ENCODE measurements at regions of chr4 and their contacts with region 1.

Region 1: GRCh38 chr4:168153596-168154440 is 61.5 kb downstream of the ANXA10 start:
- H3K4me3 Mint-ChIP-seq: no peak overlapping the region
- H3K27ac Mint-ChIP-seq: no peak overlapping the region
- H3K4me1 Mint-ChIP-seq: no peaks in the 10 kb centered on the region
- H3K27me3 Mint-ChIP-seq: no peaks in the 10 kb centered on the region

Region 2: DNA sequence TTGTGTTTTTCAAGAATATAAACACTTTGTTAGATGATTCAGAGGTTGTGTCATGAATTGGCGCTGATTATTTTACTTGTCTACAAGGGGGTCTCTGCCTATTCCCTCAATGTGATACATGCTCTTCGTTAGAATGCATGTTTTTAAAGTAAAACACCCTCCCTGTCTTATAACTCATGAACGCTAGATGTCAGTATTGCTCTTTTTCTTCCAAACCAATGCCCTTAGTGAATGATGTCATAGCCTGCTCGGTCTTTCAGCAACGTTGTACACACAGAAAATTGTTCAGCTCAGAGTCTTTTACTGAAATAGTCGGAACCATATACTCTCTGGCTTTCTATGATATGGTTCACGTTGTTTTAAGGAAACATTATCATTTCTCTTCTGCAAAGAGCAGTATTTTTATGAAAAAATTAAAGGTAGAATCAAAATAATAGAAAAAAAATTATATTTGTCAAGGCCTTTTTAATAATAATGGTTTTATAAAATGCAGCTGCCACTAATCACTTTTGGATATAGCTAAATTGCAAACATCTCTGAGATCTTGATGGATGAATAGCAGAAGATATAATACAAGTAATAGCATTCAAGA is 1987.9 kb before region 1 on chr4:
- intact Hi-C with region 1: loop called (anchors 10 kb)
- H3K4me3 Mint-ChIP-seq: no peak overlapping the region
- H3K27ac Mint-ChIP-seq: no peak overlapping the region
- H3K4me1 Mint-ChIP-seq: no peaks in the 10 kb centered on the region
- H3K27me3 Mint-ChIP-seq: no peaks in the 10 kb centered on the region

Region 3: GRCh38 chr4:168188754-168189153 is 34.9 kb after region 1 on chr4:
- intact Hi-C with region 1: no loop called
- H3K4me3 Mint-ChIP-seq: no peak overlapping the region
- H3K27ac Mint-ChIP-seq: no peak overlapping the region
- H3K4me1 Mint-ChIP-seq: peaks cover 13% of the 10 kb centered on the region
- H3K27me3 Mint-ChIP-seq: no peaks in the 10 kb centered on the region

Region 4: DNA sequence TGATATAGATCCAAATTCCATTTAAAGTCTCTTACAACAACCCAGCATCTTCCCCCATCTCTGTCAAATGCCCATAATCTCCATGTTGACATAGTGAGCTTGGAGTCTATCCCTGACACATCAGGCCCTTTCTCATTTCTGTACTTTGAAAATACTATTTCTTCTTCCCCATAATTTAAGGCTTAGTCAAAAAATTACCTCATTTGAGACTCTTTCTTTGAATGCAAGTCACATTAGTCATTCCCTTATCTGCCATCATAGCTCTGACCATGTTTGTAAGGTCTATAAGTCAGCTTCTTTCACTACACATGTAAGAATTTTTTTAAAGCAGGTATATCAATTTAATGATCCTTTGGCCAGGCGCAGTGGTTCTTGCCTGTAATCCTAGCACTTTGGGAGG is 64.8 kb after region 1 on chr4:
- intact Hi-C with region 1: no loop called
- H3K4me3 Mint-ChIP-seq: no peak overlapping the region
- H3K27ac Mint-ChIP-seq: no peak overlapping the region
- H3K4me1 Mint-ChIP-seq: no peaks in the 10 kb centered on the region
- H3K27me3 Mint-ChIP-seq: no peaks in the 10 kb centered on the region

Region 5: DNA sequence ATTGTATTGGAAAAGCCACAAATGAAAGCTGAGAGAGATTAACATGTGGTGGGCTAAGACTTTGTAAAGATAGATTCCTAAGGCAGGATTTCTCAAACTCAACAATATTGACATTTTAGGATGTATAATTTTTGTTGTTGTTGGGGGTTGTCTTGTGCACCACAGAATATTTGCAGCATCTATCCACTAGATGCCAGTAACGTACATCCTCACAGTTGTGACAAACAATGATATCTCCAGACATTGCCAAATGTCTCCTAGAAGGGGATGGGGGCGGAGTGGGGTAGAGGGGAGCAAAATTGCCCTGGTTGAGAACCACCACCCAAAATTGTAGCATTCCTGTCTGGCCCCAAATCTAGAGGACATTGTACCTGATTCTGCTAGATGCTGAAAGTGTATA is 870.9 kb after region 1 on chr4:
- intact Hi-C with region 1: no loop called
- H3K4me3 Mint-ChIP-seq: no peak overlapping the region
- H3K27ac Mint-ChIP-seq: no peak overlapping the region
- H3K4me1 Mint-ChIP-seq: no peaks in the 10 kb centered on the region
- H3K27me3 Mint-ChIP-seq: no peaks in the 10 kb centered on the region

Measured in dendritic cell treated with granulocyte-macrophage colony-stimulating factor and Interleukin-4, amounts not matched to agents 40 ng/mL and 50 ng/mL, for 4 days (primary cell).